Heart left ventricle (tissue), 16 donors: ENCODE measurements at regions of chr16 and their contacts with region 1.

Region 1: DNA sequence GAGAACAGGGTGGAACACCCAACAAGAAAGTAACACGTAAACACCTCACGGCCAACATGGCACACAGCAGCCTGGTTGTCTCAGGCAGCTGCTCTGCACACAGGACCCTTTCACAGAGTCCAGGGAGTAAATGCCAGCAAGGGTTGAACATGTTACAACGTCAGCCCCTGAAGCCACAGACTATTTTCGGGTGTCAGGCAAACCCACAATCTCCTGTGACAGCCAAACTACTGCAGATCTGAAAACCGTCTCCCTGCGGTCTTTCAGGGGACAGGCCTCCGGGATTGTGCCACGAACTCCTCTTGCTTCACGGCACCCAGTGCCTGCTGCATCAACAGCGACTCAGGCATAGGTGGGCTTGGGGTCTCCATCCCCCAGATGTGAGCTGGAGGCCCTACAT is 127.7 kb downstream of the XYLT1 start:
- DNase-seq: no peak
- ATAC-seq: no peak
- H3K4me3 ChIP-seq: no peak overlapping the region
- H3K27ac ChIP-seq: peak overlapping the region in 2 of 12 donors; percentile 30 to 80
- H3K4me1 ChIP-seq: peaks cover 0 to 75% (median 26%) of the 10 kb centered on the region in 12 donors
- H3K27me3 ChIP-seq: no peaks in the 10 kb centered on the region
- CTCF ChIP-seq: no peak
- POLR2A ChIP-seq: no peak

Region 2: DNA sequence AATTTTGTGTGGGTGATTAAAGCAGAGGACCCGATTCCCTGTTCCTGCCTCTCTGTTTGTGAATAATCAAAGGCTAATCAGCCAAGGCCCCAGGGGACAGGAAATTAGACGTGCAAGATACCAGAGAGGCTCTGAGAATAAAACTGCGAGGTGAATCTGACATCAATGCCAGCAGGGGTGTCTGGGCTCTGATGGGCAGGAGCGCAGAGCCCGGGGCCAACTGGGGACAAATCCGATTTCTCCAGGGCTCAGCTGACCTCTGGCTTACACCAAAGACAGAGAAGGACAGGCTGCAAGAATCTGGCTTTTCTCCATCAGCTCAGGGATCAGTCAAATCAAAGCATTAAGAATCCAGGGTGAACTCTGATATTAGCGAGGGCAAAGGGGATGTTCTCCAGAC is 46.6 kb before region 1 on chr16:
- intact Hi-C with region 1: loop called in 1 of 10 experiments (anchors 10 kb)
- DNase-seq: peak in 4 of 5 donors; percentile 18 to 65 (median 30)
- ATAC-seq: peak in 3 of 4 donors; percentile 73 to 81 (median 79)
- H3K4me3 ChIP-seq: no peak overlapping the region
- H3K27ac ChIP-seq: peak overlapping the region in 5 of 12 donors; percentile 39 to 63 (median 43)
- H3K4me1 ChIP-seq: peaks cover 0 to 20% (median 6%) of the 10 kb centered on the region in 12 donors
- H3K27me3 ChIP-seq: no peaks in the 10 kb centered on the region
- CTCF ChIP-seq: no peak
- POLR2A ChIP-seq: no peak

Region 3: GRCh38 chr16:17397499-17397891 is 54.5 kb after region 1 on chr16:
- intact Hi-C with region 1: loop called in 1 of 10 experiments (anchors 10 kb)
- DNase-seq: peak in 2 of 5 donors; percentile 24 to 49
- ATAC-seq: peak; percentile 43 to 83 (median 72)
- H3K4me3 ChIP-seq: no peak overlapping the region
- H3K27ac ChIP-seq: peak overlapping the region in 3 of 12 donors; percentile 27 to 76 (median 32)
- H3K4me1 ChIP-seq: peaks cover 0 to 36% (median 15%) of the 10 kb centered on the region in 12 donors
- H3K27me3 ChIP-seq: no peaks in the 10 kb centered on the region
- CTCF ChIP-seq: no peak
- POLR2A ChIP-seq: no peak